PC-9 (cell line): ENCODE measurements at regions of chr12 and their contacts with region 1.

Region 1: GRCh38 chr12:14384783-14385638 is 19.5 kb downstream of the ATF7IP start:
- DNase-seq: peak; percentile 63 to 75
- H3K4me3 ChIP-seq: no peak overlapping the region
- H3K27ac ChIP-seq: no peak overlapping the region
- H3K4me1 ChIP-seq: 0 out of 2 replicates have a peak, but pooled peaks cover 8% of the 10 kb centered on the region
- H3K27me3 ChIP-seq: no peaks in the 10 kb centered on the region
- CTCF ChIP-seq: no peak

Region 2: DNA sequence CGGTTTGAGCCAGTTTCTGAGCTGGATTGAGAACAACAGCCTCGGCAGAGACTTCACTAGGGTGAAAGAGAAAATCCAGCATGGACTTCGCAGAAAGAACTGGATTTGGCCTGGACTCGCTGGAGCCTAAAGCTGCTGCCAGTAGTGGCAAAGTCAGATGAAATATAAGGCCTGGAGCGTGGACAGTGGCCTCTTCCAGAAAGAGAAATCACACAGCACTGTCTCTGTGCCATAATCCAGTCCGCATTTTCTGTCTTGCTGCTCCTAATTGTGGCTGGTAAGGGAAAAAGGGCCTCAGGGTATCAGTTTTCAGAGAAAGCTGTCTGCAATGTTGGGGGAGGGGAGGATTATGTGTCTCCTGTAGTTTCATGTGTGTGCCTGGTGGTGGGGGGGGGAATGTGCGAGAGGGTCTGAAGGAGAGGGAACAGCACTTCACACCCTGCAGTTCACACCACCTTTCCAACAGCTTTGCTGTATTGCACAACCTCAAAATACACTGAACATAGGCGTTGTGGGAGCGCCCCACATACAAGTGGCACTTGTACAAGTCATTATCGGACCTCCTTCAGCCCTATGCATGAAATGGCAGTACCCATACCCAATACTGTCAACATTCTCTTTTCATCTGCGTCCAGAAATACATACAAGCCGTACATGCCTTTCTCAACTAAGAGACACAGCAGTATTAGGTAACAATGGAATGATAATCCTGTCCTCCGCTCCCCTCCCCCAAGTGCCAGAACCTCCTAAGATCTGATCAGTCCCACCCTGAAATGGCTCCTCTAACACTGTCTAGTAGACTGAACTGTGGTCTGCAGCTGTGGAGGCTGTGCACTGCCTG is 127.1 kb before region 1 on chr12:
- CTCF ChIA-PET with region 1: interaction called, 4 read pairs
- POLR2A ChIA-PET with region 1: no interaction called
- intact Hi-C with region 1: loop called (anchors 1 kb)
- DNase-seq: peak; percentile 86 to 95
- H3K4me3 ChIP-seq: no peak overlapping the region
- H3K27ac ChIP-seq: peak overlapping the region; percentile 93
- H3K4me1 ChIP-seq: peaks cover 40% of the 10 kb centered on the region
- H3K27me3 ChIP-seq: no peaks in the 10 kb centered on the region
- CTCF ChIP-seq: no peak

Region 3: GRCh38 chr12:14403711-14404196 is 18.7 kb after region 1 on chr12:
- CTCF ChIA-PET with region 1: no interaction called
- POLR2A ChIA-PET with region 1: interaction called, 10 read pairs
- intact Hi-C with region 1: no loop called
- DNase-seq: no peak
- H3K4me3 ChIP-seq: no peak overlapping the region
- H3K27ac ChIP-seq: peak overlapping the region; percentile 1; the same call in 1 of the 2 replicates
- H3K4me1 ChIP-seq: peaks cover 9% of the 10 kb centered on the region; the same call in 1 of the 2 replicates
- H3K27me3 ChIP-seq: no peaks in the 10 kb centered on the region
- CTCF ChIP-seq: no peak